ENCODE measurements at regions of chr3 and their contacts with region 1.

Region 1: DNA sequence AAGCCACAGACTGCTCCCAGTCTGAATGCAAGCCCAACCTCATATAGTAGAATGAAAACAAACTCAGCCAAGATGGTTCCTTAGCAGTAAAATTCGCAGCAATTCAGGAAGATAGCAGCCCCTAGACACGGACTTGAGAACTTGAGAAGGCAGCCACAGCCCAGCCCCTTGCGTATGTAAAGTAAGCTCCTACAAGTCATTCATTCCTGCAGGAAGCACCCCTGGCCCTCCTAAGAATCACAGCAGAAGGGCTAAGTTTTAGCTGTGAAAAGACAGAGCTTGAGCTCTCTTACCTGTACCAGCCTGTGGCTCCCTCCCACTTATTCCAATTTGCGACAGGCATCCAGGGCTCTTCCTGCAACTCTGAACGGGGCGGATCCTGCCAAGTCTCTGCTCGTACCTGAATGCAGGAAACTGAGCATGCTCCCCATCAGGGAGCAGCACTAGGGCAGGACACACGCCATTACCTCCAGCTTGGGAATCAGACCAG is 136.4 kb downstream of the MAGI1 start:
- H3K4me3 ChIP-seq: no peak overlapping the region
- H3K27ac ChIP-seq: no peak overlapping the region; the same call in 1 of the 2 replicates
- H3K4me1 ChIP-seq: no peaks in the 10 kb centered on the region
- CTCF ChIP-seq: no peak

Region 2: DNA sequence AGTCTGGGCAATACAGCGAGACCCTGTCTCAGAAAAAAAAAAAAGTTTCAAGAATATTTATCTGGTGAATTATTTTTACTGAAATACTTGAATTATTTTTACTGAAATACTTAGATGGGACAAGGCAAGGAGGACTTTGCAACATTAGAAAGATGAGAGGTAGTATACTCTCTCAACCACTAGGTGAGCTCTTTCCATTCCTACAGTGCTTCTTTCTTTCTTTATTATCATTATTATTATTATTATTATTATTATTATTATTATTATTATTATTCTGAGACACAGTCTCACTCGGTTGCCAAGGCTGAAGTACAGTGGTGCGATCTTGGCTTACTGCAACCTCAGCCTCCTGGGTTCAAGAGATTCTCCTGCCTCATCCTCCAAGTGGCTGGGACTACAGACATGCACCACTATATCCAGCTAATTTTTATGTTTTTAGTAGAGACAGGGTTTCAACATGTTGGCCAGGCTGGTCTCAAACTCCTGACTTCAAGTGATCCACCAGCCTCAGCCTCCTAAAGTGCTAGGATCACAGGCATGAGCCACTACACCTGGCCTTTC is 332.4 kb before region 1 on chr3:
- CTCF ChIA-PET with region 1: no interaction called
- POLR2A ChIA-PET with region 1: no interaction called
- H3K4me3 ChIP-seq: no peak overlapping the region
- H3K27ac ChIP-seq: no peak overlapping the region
- H3K4me1 ChIP-seq: no peaks in the 10 kb centered on the region
- CTCF ChIP-seq: no peak

Region 3: GRCh38 chr3:65963787-65964677 is 61.7 kb after region 1 on chr3:
- CTCF ChIA-PET with region 1: no interaction called
- POLR2A ChIA-PET with region 1: interaction called, 12 read pairs
- H3K4me3 ChIP-seq: no peak overlapping the region
- H3K27ac ChIP-seq: no peak overlapping the region; the same call in 1 of the 2 replicates
- H3K4me1 ChIP-seq: 0 out of 2 replicates have a peak, but pooled peaks cover 2% of the 10 kb centered on the region
- CTCF ChIP-seq: no peak

Region 4: DNA sequence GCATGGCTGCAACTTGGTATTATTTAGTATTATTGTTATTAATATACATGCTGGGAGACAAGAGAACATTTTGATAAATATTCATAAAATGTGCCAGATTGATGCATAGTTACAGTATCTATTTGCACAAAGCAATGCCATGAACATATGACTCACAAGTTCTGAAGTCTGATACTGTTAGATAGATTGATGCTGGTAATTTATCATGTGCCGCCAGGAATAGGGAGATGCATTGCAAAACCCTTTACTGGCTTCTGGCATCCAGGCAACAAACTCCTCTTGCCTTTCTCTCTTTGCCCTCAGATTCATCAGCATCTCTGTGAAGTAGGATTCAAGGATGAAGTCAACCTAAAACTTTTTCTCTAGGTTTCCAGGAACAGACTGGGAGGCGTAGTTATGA is 277.4 kb after region 1 on chr3:
- CTCF ChIA-PET with region 1: no interaction called
- POLR2A ChIA-PET with region 1: no interaction called
- H3K4me3 ChIP-seq: no peak overlapping the region
- H3K27ac ChIP-seq: no peak overlapping the region
- H3K4me1 ChIP-seq: no peaks in the 10 kb centered on the region
- CTCF ChIP-seq: no peak

Measured in HEK293 (cell line).